ENCODE measurements at regions of chr16 and their contacts with region 1.

Region 1: DNA sequence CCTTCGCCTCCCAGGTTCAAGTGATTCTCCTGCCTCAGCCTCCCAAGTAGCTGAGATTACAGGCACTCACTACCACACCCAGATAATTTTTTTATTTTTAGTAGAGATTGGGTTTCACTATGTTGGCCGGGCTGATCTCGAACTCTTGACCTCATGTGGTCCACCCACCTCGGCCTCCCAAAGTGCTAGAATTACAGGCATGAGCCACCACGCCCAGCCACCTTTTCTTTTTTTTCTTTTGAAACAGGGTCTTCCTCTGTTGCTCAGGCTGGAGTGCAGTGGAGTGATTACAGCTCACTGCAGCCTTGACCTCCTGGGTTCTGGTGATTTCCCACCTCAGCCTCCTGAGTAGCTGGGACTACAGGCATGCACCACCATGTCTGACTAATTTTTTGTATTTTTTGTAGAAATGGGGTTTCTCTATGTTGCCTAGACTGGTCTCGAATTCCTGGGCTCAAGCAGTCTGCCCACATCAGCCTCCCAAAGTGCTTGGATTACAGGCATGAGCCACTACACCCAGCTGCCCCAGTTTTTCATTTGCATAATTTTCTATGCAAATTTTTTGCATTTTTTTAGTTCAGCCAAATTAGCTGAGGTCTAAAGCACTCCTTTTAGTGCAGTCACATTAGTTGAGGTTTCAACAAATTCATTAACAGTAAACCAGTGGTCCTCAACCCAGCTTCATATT is 11.3 kb downstream of the WWP2 start:
- DNase-seq: no peak
- H3K4me3 ChIP-seq: no peak overlapping the region
- H3K27ac ChIP-seq: no peak overlapping the region
- H3K4me1 ChIP-seq: peaks cover 26% of the 10 kb centered on the region
- CTCF ChIP-seq: no peak

Region 2: DNA sequence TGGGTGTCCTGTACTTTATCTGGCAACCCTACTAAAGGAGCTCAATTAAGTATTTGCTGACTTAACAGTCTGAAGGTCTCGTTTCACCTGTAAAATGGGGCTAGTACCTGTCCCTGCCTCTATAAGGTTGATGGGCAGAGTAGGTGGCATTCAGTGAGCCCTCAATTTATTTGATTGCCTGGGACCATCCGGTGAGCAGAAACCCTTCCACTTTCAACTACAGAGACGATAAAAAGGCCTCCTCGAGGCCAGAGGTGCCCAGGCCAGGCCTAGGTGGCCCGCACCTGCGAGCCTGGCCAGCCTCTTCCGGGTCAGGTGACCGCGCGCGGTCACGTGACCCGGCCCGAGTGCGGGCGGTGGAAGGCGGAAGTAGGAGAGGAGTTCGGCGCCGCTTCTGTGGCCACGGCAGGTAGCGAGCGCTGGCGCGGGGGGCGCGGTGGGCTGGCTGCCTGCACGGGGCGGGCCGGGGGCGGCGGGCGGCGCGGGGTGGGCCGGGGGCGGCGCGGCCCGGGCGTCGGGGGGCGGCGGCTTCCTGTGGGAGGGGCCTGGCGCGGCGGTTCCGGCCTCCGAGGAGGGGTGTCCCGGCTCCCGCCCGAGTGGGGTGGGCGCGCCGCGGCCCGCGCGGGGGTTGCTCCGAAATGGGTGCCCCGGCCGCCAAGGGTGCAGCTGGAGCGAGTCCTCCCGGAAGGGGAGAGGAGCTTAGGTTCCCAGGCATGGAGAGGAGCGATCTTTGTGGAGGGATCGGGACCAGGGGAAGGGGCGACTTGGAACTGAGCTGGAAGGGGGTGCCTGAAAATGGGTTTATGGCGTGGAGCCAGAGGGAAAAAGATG is 11.2 kb before region 1 on chr16 and contains the start of gene WWP2:
- CTCF ChIA-PET with region 1: interaction called, 3 read pairs
- POLR2A ChIA-PET with region 1: interaction called, 16 read pairs
- intact Hi-C with region 1: no loop called
- DNase-seq: peak; percentile 90
- H3K4me3 ChIP-seq: peak within 1 kb of the TSS; percentile 96
- H3K27ac ChIP-seq: peak within 1 kb of the TSS; percentile 56
- H3K4me1 ChIP-seq: peaks cover 17% of the 10 kb centered on the region
- CTCF ChIP-seq: no peak
- total RNA-seq, gene WWP2: 20.8 and 30.3 TPM in 2 replicates

Region 3: DNA sequence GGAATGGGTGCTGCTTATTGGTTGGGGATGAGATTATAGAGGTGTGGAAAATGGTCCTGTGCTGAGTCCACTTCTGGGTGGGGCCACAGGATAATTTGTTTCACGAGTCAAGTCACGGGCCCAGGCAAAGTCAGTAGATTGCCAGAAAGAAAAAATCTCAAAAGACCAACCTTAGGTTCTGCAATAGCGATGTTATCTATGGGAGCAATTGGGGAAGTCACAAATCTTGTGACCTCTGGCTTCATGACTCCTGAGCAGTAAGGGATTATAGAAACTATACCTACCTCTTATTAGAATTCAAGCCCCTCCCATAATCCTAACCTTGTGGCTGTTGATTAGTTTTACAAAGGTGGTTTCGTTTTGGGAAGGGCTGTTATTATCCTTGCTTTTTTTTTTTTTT is 20.1 kb after region 1 on chr16:
- CTCF ChIA-PET with region 1: no interaction called
- POLR2A ChIA-PET with region 1: no interaction called
- intact Hi-C with region 1: no loop called
- DNase-seq: no peak
- H3K4me3 ChIP-seq: no peak overlapping the region
- H3K27ac ChIP-seq: no peak overlapping the region
- H3K4me1 ChIP-seq: no peaks in the 10 kb centered on the region
- CTCF ChIP-seq: no peak